SK-N-SH (cell line): ENCODE measurements at regions of chr1 and their contacts with region 1.

Region 1: GRCh38 chr1:226640296-226640695 is 91.7 kb downstream of the STUM start:
- DNase-seq: no peak
- H3K4me3 ChIP-seq: no peak overlapping the region
- H3K27ac ChIP-seq: no peak overlapping the region
- H3K4me1 ChIP-seq: peaks cover 0 to 5% of the 10 kb centered on the region in 2 experiments; a peak in 1 of 4 replicates
- H3K27me3 ChIP-seq: no peaks in the 10 kb centered on the region
- CTCF ChIP-seq: no peak
- EP300 ChIP-seq: no peak
- RAD21 ChIP-seq: no peak

Region 2: GRCh38 chr1:226444901-226445300 is 195.4 kb before region 1 on chr1:
- CTCF ChIA-PET with region 1: interaction called, 3 read pairs
- POLR2A ChIA-PET with region 1: interaction called, 11 read pairs
- DNase-seq: no peak
- H3K4me3 ChIP-seq: no peak overlapping the region
- H3K27ac ChIP-seq: no peak overlapping the region
- H3K4me1 ChIP-seq: no peaks in the 10 kb centered on the region
- H3K27me3 ChIP-seq: no peaks in the 10 kb centered on the region; the same call in 1 of the 2 replicates
- CTCF ChIP-seq: no peak
- EP300 ChIP-seq: no peak
- RAD21 ChIP-seq: no peak

Region 3: DNA sequence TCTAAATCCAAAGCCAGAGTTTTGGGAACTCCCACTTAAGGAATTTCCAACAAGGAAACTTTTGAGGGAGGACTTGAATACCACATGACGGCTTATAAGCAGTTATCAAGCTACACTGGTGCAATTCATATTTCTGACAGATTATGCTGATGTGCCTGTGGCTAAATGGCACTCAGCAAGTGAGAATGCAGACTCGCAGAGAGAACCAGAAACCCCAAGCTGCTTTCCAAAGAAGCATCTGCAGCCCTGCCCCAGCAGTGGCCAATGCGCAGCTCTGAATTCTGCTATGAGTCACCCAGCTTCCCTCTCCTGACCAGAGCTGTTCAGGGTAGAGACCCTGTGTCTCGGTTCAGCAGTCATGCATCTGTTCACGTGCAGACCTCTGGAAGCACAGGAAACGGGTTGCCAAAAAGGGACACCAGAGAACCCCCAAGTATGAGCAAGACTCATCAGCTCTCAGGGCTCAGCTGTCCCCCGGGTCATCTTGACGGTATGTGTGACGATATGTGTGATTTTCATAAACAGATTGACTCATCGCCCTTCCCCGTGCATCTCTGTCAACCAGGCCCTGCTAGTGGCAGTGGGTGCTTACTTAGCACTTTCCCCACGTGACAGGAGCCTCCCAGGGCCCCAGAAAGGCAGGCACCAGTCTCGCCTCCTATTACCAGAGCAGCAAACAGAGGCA is 22.5 kb after region 1 on chr1:
- CTCF ChIA-PET with region 1: no interaction called
- POLR2A ChIA-PET with region 1: no interaction called
- DNase-seq: peak; percentile 78
- H3K4me3 ChIP-seq: no peak overlapping the region
- H3K27ac ChIP-seq: peak overlapping the region; percentile 39 to 57; a peak in 3 of 4 replicates
- H3K4me1 ChIP-seq: peaks cover 12 to 18% of the 10 kb centered on the region in 2 experiments; a peak in 3 of 4 replicates
- H3K27me3 ChIP-seq: no peaks in the 10 kb centered on the region
- CTCF ChIP-seq: no peak
- EP300 ChIP-seq: peak; percentile 9 to 34; a peak in 1 of 4 replicates
- RAD21 ChIP-seq: peak; percentile 13; the same call in 1 of the 2 replicates

Region 4: DNA sequence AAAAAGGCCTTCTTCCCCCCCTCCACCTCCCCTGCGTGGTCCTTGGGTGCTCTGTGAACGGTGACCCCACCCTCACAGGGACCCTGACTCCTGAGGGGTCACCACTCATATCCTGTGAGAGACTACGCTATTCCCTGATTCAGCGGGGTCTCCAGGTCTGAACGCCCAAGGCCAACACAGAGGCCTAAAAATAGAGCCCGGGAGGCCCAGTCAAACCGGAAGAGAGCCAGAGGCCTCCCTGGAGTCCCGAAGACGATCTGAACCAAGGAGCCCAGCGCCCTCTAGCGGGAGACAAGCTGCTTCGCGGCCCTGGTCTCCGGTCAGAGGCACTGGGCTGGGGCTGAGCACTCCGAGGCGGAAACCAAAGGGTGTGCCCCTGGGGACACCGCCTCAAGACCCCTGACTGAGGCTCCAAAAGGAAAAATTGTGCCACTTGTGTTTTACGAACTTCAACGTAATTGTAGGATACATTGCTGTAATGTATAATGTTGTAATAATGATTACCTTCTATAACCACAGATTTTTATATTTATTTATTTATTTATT is 187.7 kb after region 1 on chr1:
- CTCF ChIA-PET with region 1: interaction called, 120 read pairs
- POLR2A ChIA-PET with region 1: interaction called, 3 read pairs
- DNase-seq: peak; percentile 88
- H3K4me3 ChIP-seq: peak overlapping the region in 1 of 2 experiments; percentile 16; a peak in 1 of 4 replicates
- H3K27ac ChIP-seq: no peak overlapping the region
- H3K4me1 ChIP-seq: peaks cover 0 to 2% of the 10 kb centered on the region in 2 experiments; a peak in 1 of 4 replicates
- H3K27me3 ChIP-seq: no peaks in the 10 kb centered on the region; the same call in 1 of the 2 replicates
- CTCF ChIP-seq: peak; percentile 92
- EP300 ChIP-seq: no peak
- RAD21 ChIP-seq: peak; percentile 93